B cell (primary cell): ENCODE measurements at regions of chr5 and their contacts with region 1.

Region 1: GRCh38 chr5:142151436-142152383 is 43.1 kb downstream of the NDFIP1 start:
- DNase-seq: peak; percentile 67
- ATAC-seq: no peak
- H3K4me3 ChIP-seq: no peak overlapping the region
- H3K4me3 Mint-ChIP-seq: no peak overlapping the region
- H3K27ac ChIP-seq: no peak overlapping the region
- H3K27ac Mint-ChIP-seq: no peak overlapping the region
- H3K4me1 ChIP-seq: no peaks in the 10 kb centered on the region
- H3K4me1 Mint-ChIP-seq: no peaks in the 10 kb centered on the region
- H3K27me3 ChIP-seq: no peaks in the 10 kb centered on the region
- H3K27me3 Mint-ChIP-seq: no peaks in the 10 kb centered on the region
- CTCF ChIP-seq: peak; percentile 90

Region 2: GRCh38 chr5:142655339-142656267 is 503.9 kb after region 1 on chr5:
- CTCF ChIA-PET with region 1: interaction called, 6 read pairs
- POLR2A ChIA-PET with region 1: no interaction called
- intact Hi-C with region 1: loop called (anchors 1 kb)
- DNase-seq: peak; percentile 60
- ATAC-seq: peak; percentile 75
- H3K4me3 ChIP-seq: no peak overlapping the region
- H3K4me3 Mint-ChIP-seq: no peak overlapping the region
- H3K27ac ChIP-seq: no peak overlapping the region
- H3K27ac Mint-ChIP-seq: no peak overlapping the region
- H3K4me1 ChIP-seq: no peaks in the 10 kb centered on the region
- H3K4me1 Mint-ChIP-seq: no peaks in the 10 kb centered on the region
- H3K27me3 ChIP-seq: peaks cover 0 to 12% (median 2%) of the 10 kb centered on the region in 4 experiments
- H3K27me3 Mint-ChIP-seq: peaks cover 50% of the 10 kb centered on the region
- CTCF ChIP-seq: peak; percentile 91